Activated naive CD4-positive, alpha-beta T cell treated with anti-CD3 and anti-CD28 coated beads, Interleukin-2, amount 10 ng/mL, durations not matched to agents 7 days and 5 days (primary cell): ENCODE measurements at regions of chr12 and their contacts with region 1.

Region 1: DNA sequence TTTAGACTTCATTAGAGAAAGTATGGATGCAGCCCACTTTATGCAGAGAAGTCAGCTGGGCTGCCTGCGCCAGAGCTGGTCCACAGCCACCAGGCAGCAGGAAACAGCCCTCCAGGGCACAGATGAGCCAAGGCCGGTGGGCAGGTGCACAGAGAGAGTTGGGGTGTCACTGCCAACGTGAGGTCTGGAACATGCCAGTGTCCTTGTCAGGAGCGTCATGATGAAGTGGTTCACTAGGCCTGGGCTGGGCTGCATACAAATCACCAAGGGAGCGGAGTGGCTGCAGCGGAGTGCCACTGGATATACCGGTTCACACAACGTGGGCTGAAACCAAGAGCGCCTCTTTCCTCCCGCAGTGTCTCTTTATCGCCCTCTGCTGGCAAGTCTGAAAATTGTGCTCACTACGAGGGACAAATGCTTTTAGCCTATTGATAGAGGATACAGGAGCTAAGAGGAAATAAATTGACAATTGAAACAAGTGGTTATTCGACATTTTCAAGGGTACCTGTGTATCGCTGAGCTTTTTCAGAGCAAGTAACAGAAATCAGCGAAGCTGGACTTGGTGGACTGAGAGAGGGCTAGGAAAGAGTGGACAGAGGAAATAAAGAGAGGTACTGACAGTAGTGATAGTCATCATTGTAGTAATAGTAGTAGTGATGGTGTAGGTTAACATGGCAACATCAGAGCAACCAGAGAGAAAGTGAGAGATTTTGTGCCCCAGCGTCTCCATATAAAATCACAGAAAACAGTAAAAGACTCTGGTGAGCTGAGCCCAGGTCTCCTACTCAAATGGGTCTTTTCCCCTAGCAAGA is 52.0 kb upstream of the ITPR2 start:
- DNase-seq: peak; percentile 89
- H3K4me3 Mint-ChIP-seq: peak overlapping the region; percentile 4
- H3K27ac Mint-ChIP-seq: no peak overlapping the region
- H3K4me1 Mint-ChIP-seq: peaks cover 13% of the 10 kb centered on the region
- H3K27me3 Mint-ChIP-seq: peaks cover 21% of the 10 kb centered on the region

Region 2: GRCh38 chr12:26696613-26697092 is 188.3 kb before region 1 on chr12:
- CTCF ChIA-PET with region 1: no interaction called
- DNase-seq: no peak
- H3K4me3 Mint-ChIP-seq: no peak overlapping the region
- H3K27ac Mint-ChIP-seq: no peak overlapping the region
- H3K4me1 Mint-ChIP-seq: no peaks in the 10 kb centered on the region
- H3K27me3 Mint-ChIP-seq: no peaks in the 10 kb centered on the region

Region 3: DNA sequence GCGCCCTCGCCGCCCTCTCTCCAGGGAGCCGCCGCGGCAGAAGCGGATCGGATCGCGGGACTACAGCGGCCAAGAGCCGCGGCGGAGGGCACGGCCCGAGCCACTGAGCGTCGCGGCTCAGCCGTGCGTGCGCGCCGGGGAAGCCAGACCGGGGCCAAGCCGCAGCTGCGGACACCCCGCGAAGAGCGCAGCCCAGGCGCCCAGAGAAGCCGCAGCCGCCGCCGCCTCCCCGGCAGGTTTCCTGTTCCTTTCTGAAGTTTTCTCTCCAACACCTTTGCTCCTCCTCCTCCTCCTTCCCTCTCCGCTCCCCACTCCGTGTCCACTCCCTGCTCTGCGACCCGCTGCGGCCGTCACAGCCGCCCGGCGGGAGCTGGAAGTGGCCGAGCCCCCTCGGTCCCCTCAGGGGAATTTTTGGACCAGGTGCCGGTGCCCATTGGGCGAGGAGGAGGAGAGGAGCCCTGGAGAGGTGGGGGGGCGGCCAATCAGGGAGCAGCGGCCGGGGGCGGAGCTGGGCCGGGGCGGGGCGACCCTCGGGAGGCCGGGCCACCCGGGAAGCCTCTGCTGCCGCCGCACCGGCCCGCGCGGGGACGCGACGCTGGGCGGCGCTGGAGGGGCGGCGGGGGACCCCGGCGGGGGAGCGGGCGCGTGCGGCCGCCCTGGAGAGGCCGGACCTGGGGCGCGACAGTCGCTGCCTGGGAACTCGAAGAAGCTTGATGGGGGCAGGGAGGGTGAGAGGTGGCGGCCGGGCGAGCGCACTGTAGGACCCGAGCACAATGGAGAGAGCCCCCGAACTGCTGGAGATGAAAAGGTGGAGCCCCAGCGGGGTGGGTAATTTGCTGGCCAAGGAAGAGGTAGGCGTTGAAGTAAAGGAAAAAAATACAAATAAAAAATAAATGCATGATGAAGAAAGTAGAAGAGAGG is 51.9 kb before region 1 on chr12 and contains the start of gene ITPR2:
- CTCF ChIA-PET with region 1: interaction called, 21 read pairs
- DNase-seq: peak; percentile 95
- H3K4me3 Mint-ChIP-seq: peak within 1 kb of the TSS; percentile 98
- H3K27ac Mint-ChIP-seq: peak within 1 kb of the TSS; percentile 98
- H3K4me1 Mint-ChIP-seq: peaks cover 36% of the 10 kb centered on the region
- H3K27me3 Mint-ChIP-seq: peaks cover 4% of the 10 kb centered on the region

Region 4: GRCh38 chr12:26853303-26854030 is 31.5 kb before region 1 on chr12:
- CTCF ChIA-PET with region 1: interaction called, 44 read pairs
- DNase-seq: peak; percentile 83
- H3K4me3 Mint-ChIP-seq: no peak overlapping the region
- H3K27ac Mint-ChIP-seq: no peak overlapping the region
- H3K4me1 Mint-ChIP-seq: no peaks in the 10 kb centered on the region
- H3K27me3 Mint-ChIP-seq: no peaks in the 10 kb centered on the region

Region 5: DNA sequence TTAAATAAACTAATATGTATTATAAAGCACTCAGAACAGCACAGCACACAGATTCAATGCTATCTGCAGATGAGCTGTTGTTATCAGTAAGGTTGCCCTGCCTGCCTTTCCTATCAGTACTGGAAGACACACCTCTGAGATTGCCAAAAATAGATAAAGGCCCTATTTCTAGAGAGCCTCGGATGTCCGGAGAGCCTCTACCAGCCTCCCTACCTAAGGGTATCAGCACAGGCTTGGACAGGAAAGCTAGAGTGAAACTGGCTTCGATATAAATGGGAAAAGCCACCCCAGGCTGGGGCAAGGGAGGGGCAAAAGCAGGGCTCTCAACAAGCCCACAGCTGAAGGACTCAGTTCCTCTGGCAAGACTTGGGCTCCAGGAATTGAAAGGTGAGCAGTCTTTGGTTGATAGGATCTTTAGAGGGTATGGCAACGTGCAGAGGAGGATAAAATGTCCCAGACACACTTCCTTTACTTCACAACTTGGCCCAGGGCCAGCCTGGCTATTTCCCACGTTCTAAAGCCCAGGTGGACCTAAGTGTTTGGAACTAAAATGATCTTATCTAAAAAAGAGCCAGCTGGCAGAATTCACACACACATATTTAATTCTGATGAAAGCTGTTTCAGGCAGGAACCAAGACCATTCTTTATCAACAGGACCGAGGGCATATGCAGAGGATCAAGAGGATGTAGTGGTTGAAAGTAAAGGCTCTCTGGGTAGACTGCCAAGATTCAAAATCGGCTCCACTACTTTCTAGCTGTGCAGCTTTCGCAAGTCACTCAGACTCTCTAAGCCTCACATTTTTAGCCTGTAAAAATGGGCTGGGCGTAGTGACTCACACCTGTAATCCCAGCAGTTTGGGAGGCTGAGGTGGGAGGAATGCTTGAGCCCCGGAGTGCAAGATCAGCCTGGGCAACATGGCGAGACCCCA is 14.2 kb before region 1 on chr12:
- CTCF ChIA-PET with region 1: interaction called, 27 read pairs
- DNase-seq: no peak
- H3K4me3 Mint-ChIP-seq: no peak overlapping the region
- H3K27ac Mint-ChIP-seq: no peak overlapping the region
- H3K4me1 Mint-ChIP-seq: peaks cover 20% of the 10 kb centered on the region
- H3K27me3 Mint-ChIP-seq: peaks cover 22% of the 10 kb centered on the region

Region 6: GRCh38 chr12:26906704-26907103 is 21.7 kb after region 1 on chr12:
- CTCF ChIA-PET with region 1: interaction called, 10 read pairs
- DNase-seq: no peak
- H3K4me3 Mint-ChIP-seq: no peak overlapping the region
- H3K27ac Mint-ChIP-seq: no peak overlapping the region
- H3K4me1 Mint-ChIP-seq: peaks cover 5% of the 10 kb centered on the region
- H3K27me3 Mint-ChIP-seq: no peaks in the 10 kb centered on the region

Region 7: DNA sequence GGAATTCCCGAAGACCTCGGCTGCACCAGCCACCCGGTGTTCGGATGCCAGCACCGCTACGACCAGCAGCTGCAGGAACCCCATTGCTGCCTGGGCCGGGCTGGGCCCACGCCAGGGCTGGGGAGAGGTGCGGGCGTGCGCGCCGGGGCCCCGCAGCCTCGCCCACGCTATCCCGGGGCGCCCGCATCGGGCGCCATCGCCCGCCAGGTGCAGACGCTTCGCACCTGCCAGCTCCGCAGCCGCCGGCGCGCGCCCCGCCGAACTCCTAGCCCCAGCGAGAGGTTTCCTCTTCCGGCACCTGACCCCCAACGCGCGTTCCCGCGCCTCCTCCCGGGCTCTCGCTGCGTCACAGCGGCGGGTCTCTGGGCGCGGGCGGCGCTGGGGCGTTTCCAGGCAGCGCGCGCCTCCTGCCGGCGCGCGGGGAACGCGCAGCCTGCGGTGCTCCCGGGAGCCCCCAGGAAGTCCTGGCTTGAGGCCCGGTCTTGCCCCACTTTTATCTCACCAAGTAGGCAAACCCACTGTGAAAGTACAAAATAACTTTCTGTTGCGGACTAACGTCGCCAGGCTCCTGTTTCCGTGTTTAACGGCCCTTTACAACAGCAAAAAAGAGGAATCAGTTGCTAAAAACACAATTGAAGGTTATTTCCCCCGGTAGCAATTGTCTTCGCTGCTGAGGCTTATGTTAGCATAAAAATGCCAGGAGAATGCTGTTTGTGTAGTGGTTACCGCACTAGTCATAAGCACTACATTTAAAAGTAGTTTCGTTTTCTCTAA is 129.3 kb after region 1 on chr12 and contains the start of gene TM7SF3:
- CTCF ChIA-PET with region 1: interaction called, 11 read pairs
- DNase-seq: peak; percentile 97
- H3K4me3 Mint-ChIP-seq: peak within 1 kb of the TSS; percentile 94
- H3K27ac Mint-ChIP-seq: peak within 1 kb of the TSS; percentile 98
- H3K4me1 Mint-ChIP-seq: peaks cover 58% of the 10 kb centered on the region
- H3K27me3 Mint-ChIP-seq: peaks cover 3% of the 10 kb centered on the region